ENCODE measurements at regions of chr1 and their contacts with region 1.

Region 1: GRCh38 chr1:211258756-211259637 is at the start of gene RCOR3:
- DNase-seq: peak; percentile 81 to 95 (median 90)
- H3K4me3 ChIP-seq: peak within 1 kb of the TSS; percentile 59 to 97 (median 90)
- H3K27ac ChIP-seq: peak within 1 kb of the TSS; percentile 95 to 100 (median 99)
- H3K27me3 ChIP-seq: no peaks in the 10 kb centered on the region
- CTCF ChIP-seq: peak; percentile 39 to 84 (median 58)
- total RNA-seq, gene RCOR3: 67.1 to 150 (median 96.6) TPM

Region 2: GRCh38 chr1:211382714-211383480 is 123.9 kb after region 1 on chr1:
- intact Hi-C with region 1: loop called (anchors 2 to 10 kb)
- DNase-seq: peak; percentile 76 to 96 (median 92)
- H3K4me3 ChIP-seq: peak overlapping the region; percentile 62 to 93 (median 80)
- H3K27ac ChIP-seq: peak overlapping the region; percentile 46 to 96 (median 89)
- H3K27me3 ChIP-seq: no peaks in the 10 kb centered on the region
- CTCF ChIP-seq: peak in 22 of 56 donors; percentile 3 to 55 (median 24)

Measured in dorsolateral prefrontal cortex (tissue), 120 donors.